ENCODE measurements at regions of chr7 and their contacts with region 1.

Region 1: GRCh38 chr7:47574482-47575329 is 7.2 kb downstream of the TNS3 start:
- DNase-seq: peak; percentile 93
- H3K4me3 ChIP-seq: peak overlapping the region; percentile 58
- H3K27ac ChIP-seq: peak overlapping the region; percentile 75
- H3K4me1 ChIP-seq: peaks cover 73% of the 10 kb centered on the region
- CTCF ChIP-seq: no peak

Region 2: DNA sequence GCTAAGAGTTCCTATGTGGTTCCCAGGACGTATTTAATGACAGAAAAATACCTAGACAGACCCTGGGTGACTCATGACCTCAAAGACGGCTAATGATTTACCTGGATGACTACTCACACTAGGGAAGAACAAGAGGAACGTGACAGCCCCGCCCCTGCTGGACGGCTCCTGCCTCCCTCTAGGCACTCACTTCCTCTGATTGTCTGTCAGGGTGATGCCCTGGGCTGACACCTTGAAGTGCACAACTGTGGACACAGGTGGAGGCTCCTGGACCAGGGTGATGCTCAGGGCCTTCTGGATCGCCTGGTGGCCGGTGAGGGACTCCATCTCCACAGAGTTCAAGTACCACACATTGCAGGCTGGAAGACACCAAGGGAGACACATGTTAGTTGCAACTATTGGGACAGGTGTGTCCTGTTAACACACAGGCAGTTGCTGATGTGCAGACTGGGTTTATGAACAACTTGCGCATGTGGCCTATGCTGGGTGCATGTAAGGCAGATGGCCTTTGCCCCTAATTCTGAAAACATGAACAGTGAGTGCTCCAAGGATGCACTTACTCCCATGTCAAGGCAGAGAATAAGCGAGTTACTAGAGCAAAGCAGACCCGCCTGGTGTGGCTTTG is 291.1 kb before region 1 on chr7:
- CTCF ChIA-PET with region 1: no interaction called
- POLR2A ChIA-PET with region 1: no interaction called
- intact Hi-C with region 1: no loop called
- DNase-seq: no peak
- H3K4me3 ChIP-seq: no peak overlapping the region
- H3K27ac ChIP-seq: no peak overlapping the region
- H3K4me1 ChIP-seq: peaks cover 7% of the 10 kb centered on the region
- CTCF ChIP-seq: no peak

Region 3: GRCh38 chr7:47497367-47498096 is 77.2 kb before region 1 on chr7:
- CTCF ChIA-PET with region 1: interaction called, 3 read pairs
- POLR2A ChIA-PET with region 1: interaction called, 8 read pairs
- intact Hi-C with region 1: loop called (anchors 5 kb)
- DNase-seq: peak; percentile 87
- H3K4me3 ChIP-seq: peak overlapping the region; percentile 32
- H3K27ac ChIP-seq: peak overlapping the region; percentile 86
- H3K4me1 ChIP-seq: peaks cover 53% of the 10 kb centered on the region
- CTCF ChIP-seq: no peak